MCF 10A (cell line): ENCODE measurements at regions of chrX and their contacts with region 1.

Region 1: DNA sequence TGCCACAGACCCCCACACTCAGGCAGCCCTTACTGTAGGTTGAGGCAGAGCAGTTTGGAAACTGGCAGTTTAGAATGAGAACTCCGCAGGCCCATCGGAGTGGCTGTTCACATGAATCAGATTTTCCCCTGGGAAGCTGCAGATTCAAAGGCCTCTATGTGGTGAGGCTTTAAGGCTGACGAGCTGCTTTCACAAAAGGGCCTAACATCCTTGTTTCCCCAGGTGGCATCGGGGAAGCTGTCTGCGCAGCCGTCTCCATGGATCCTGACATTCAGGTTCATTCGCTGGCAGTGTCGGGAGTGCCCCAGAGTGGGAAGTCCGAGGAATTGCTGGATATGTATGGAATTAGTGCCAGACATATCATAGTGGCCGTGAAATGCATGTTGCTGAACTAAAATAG is 33.7 kb downstream of the TKTL1 start:
- DNase-seq: no peak
- H3K4me3 Mint-ChIP-seq: no peak overlapping the region
- H3K27ac Mint-ChIP-seq: no peak overlapping the region
- H3K4me1 Mint-ChIP-seq: no peaks in the 10 kb centered on the region
- H3K27me3 Mint-ChIP-seq: peaks cover 93% of the 10 kb centered on the region
- CTCF ChIP-seq: no peak

Region 2: DNA sequence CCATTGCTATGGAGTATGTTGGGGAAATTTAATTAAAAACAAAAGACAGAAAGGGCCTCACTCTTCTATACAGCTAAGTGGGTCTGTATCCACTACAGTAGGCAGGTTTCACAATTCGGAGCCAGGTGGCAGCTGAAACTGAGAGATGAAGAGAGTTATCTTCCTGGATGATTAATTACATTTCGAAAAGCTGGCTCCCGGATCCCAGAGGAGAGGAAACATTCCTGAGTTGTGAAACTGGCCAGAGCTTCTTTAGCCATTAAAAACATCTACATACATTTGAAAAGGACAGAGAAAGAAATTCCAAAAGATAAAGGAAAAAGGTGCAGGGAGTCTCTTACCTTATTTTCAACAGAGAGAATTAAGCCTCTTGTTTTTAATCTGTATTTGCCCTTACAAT is 483.5 kb before region 1 on chrX:
- CTCF ChIA-PET with region 1: no interaction called
- POLR2A ChIA-PET with region 1: no interaction called
- intact Hi-C with region 1: no loop called
- DNase-seq: peak; percentile 35
- H3K4me3 Mint-ChIP-seq: no peak overlapping the region
- H3K27ac Mint-ChIP-seq: no peak overlapping the region
- H3K4me1 Mint-ChIP-seq: peaks cover 4% of the 10 kb centered on the region
- H3K27me3 Mint-ChIP-seq: peaks cover 81% of the 10 kb centered on the region
- CTCF ChIP-seq: no peak

Region 3: DNA sequence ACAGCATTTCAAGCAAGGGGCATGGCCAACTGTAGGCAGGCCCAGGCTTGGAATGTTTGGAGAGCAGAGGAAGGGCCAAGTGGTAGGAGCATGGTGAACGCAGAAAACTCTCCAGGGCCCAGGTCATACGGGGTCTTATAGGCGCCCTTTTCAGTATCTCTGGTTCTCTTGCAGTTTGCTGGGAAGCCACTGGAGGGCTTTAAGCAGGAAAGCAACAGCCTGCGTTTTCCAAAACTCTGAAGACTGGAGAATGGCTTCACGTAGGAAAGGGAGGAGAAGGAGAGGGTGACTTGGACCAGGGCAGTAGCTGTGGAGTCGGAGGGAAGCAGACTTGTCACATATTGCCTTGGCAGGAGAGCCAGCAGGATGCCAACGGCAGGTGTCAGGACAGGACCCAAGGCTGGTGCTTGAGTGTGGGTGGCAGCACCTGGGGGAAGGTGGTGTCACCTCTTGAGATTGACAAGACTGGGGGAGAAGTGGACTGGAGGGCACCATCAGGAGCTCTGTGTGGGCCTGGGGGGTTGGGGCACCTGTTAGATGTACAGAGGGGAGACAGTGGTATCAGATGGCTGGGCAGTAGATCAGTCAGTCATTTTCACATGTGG is 11.8 kb before region 1 on chrX:
- CTCF ChIA-PET with region 1: interaction called, 10 read pairs
- POLR2A ChIA-PET with region 1: no interaction called
- intact Hi-C with region 1: no loop called
- DNase-seq: peak; percentile 31
- H3K4me3 Mint-ChIP-seq: no peak overlapping the region
- H3K27ac Mint-ChIP-seq: no peak overlapping the region
- H3K4me1 Mint-ChIP-seq: peaks cover 6% of the 10 kb centered on the region
- H3K27me3 Mint-ChIP-seq: peaks cover 71% of the 10 kb centered on the region
- CTCF ChIP-seq: peak; percentile 33